ENCODE measurements at regions of chr3 and their contacts with region 1.

Region 1: GRCh38 chr3:9932843-9933560 is 632 bp upstream of the CRELD1 start:
- DNase-seq: peak; percentile 89 to 96
- ATAC-seq: peak; percentile 89
- H3K4me3 ChIP-seq: peak overlapping the region; percentile 50 to 61
- H3K27ac ChIP-seq: peak overlapping the region; percentile 3 to 44
- H3K4me1 ChIP-seq: peaks cover 0 to 3% of the 10 kb centered on the region in 2 donors
- H3K27me3 ChIP-seq: no peaks in the 10 kb centered on the region

Region 2: GRCh38 chr3:9731206-9732079 is 201.6 kb before region 1 on chr3 and contains the start of gene BRPF1:
- intact Hi-C with region 1: loop called in 1 of 2 experiments (anchors 5 kb)
- DNase-seq: peak; percentile 100
- ATAC-seq: peak; percentile 100
- H3K4me3 ChIP-seq: peak within 1 kb of the TSS; percentile 78 to 88
- H3K27ac ChIP-seq: peak within 1 kb of the TSS; percentile 30 to 96
- H3K4me1 ChIP-seq: no peaks in the 10 kb centered on the region
- H3K27me3 ChIP-seq: no peaks in the 10 kb centered on the region
- total RNA-seq, gene BRPF1: 16.6 to 17.6 TPM

Measured in aorta (tissue), 5 donors.